ENCODE measurements at regions of chr1 and their contacts with region 1.

Region 1: DNA sequence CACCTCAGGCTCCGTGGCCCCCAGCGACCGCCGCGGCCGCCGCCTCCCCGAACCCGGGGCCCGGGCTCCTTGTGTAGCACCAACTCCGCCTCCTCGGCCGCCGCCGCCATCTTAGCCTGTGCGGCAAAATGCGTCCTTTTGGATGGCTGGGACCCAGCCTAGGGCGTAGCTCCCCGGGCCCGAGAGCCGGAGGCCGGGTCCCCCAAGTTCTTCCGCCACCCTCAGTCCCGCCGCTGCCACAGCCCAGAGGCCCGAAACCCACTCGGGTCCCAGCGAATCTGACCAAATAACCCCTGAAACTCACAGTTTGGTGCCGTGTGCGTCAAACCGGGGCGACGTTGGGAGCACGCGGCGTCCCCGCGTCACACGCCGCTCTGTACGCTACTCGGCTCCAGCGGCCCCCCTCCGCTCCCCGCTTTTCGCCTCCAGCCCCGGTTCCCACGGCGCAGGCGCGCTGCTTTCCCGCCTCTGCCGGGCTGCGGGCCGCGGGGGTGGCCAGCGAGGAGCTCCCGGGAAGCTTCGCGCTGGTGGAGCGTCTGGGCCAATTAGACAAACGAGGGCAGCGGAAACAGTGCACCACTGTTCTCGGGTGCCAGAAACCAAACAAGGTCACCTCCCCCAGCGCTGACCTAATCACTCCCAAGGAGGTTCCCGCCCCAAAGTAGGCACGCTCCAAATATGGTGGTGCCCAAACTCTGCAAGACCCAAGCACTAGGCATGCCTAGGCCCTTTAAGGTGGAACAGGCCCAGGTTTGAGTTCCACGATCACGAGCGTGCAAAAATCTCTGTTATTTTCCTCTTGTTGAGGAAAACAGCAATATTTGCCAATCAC is at the start of gene ZNF644:
- DNase-seq: peak; percentile 88
- H3K4me3 ChIP-seq: peak within 1 kb of the TSS; percentile 95
- H3K27ac ChIP-seq: peak within 1 kb of the TSS; percentile 95
- H3K4me1 ChIP-seq: peaks cover 52% of the 10 kb centered on the region
- CTCF ChIP-seq: no peak
- total RNA-seq, gene ZNF644: 56.6 and 58.0 TPM in 2 replicates

Region 2: DNA sequence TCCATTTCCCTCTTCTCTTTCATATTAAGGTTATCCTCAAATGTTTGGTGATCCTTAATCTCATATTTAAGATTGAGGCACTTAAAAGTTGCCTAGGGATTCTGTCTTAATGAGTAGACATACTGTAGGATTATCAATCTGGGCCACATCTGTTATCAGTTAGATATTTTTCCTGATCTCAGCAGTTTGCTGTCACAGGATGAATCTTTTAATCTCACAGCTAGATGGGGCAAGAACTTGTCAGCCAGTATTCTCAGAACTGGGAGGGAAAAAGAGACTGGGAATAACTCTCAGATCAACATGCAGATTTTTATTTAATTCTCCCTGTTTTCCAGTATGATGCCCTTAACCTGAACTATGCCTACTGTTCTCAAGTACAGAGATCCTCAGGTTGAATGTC is 14.1 kb before region 1 on chr1:
- CTCF ChIA-PET with region 1: interaction called, 3 read pairs
- POLR2A ChIA-PET with region 1: interaction called, 17 read pairs
- intact Hi-C with region 1: no loop called
- DNase-seq: no peak
- H3K4me3 ChIP-seq: no peak overlapping the region
- H3K27ac ChIP-seq: no peak overlapping the region
- H3K4me1 ChIP-seq: peaks cover 5% of the 10 kb centered on the region
- CTCF ChIP-seq: no peak

Region 3: DNA sequence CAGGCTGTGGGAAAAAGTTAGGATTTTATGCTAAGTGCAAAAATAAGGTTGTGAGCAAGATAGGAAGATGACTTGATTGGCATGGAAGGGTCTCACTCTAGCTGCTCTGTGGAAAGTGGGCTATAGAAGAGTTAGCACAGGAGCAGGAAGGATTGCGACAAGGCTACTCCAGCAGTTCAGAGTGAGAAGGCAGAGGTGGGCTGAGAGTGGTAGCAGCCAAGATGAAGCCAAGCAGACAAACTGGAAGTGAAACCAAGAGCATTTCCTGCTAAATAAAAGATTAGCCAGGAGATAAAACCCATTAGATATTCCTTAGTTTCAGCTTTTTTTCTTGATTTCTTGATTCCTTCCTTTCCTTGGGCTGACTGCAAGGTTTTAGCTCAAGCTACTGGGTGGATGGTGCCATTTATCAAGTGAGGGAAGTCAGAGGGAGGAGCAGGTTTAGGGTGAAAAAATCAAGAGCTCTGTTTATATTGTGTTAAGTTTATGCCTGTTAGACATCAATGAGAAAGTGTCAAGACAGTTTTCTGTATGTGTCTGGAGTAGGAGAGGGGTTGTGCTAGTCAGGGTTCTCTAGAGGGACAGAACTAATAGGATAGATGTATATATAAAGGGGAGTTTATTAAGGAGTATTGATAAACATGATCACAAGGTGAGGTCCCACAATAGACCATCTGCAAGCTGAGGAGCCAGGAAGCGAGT is 33.0 kb after region 1 on chr1:
- CTCF ChIA-PET with region 1: interaction called, 3 read pairs
- POLR2A ChIA-PET with region 1: interaction called, 10 read pairs
- intact Hi-C with region 1: loop called (anchors 5 kb)
- DNase-seq: peak; percentile 76
- H3K4me3 ChIP-seq: peak overlapping the region; percentile 8
- H3K27ac ChIP-seq: peak overlapping the region; percentile 65
- H3K4me1 ChIP-seq: peaks cover 53% of the 10 kb centered on the region
- CTCF ChIP-seq: no peak

Region 4: GRCh38 chr1:91165033-91165654 is 143.2 kb after region 1 on chr1:
- CTCF ChIA-PET with region 1: interaction called, 6 read pairs
- POLR2A ChIA-PET with region 1: no interaction called
- intact Hi-C with region 1: loop called (anchors 1 kb)
- DNase-seq: peak; percentile 61
- H3K4me3 ChIP-seq: no peak overlapping the region
- H3K27ac ChIP-seq: no peak overlapping the region
- H3K4me1 ChIP-seq: no peaks in the 10 kb centered on the region
- CTCF ChIP-seq: peak; percentile 96

Region 5: GRCh38 chr1:91428182-91428798 is 406.4 kb after region 1 on chr1:
- CTCF ChIA-PET with region 1: no interaction called
- POLR2A ChIA-PET with region 1: no interaction called
- intact Hi-C with region 1: no loop called
- DNase-seq: no peak
- H3K4me3 ChIP-seq: no peak overlapping the region
- H3K27ac ChIP-seq: no peak overlapping the region
- H3K4me1 ChIP-seq: no peaks in the 10 kb centered on the region
- CTCF ChIP-seq: no peak